ENCODE measurements at regions of chr15 and their contacts with region 1.

Region 1: GRCh38 chr15:60507596-60508424 is 28.9 kb upstream of the ICE2 start:
- DNase-seq: peak; percentile 62
- ATAC-seq: peak; percentile 68
- H3K4me3 Mint-ChIP-seq: no peak overlapping the region
- H3K27ac Mint-ChIP-seq: peak overlapping the region; percentile 34
- H3K4me1 Mint-ChIP-seq: peaks cover 52% of the 10 kb centered on the region
- H3K27me3 Mint-ChIP-seq: no peaks in the 10 kb centered on the region

Region 2: DNA sequence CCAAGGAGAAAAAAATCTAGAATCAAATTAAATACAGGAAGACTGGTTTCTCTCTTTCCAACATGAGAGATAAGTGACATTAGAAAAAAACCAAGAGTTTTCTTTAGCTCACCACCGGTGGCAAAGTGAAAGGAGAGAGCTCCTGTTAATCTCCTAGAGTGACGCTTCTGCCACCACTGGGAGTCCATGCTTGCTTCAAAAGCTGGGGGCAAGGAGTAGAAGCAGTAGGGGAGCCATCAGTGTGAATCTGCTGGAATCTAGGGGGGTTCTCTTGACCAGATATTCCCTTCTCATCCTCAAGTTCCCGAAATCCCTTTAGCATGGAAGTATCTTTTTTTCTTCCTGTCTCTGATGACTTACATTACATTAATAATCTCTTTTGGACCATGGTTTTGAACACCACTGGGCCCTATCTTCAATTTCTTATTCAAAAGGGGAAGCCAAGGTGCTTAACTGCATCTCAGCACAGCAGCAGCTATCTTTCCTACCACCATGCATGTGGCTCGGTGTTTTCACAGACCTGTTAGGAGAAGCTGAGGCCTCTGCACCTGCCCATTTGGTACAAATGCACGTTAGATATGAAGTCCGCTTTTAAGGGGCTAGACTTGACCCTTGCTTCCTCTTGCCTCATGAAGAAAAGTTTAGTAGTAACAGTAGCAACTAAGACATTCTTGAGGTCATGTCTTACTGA is 22.3 kb before region 1 on chr15:
- CTCF ChIA-PET with region 1: interaction called, 10 read pairs
- POLR2A ChIA-PET with region 1: no interaction called
- intact Hi-C with region 1: no loop called
- DNase-seq: no peak
- ATAC-seq: no peak
- H3K4me3 Mint-ChIP-seq: no peak overlapping the region
- H3K27ac Mint-ChIP-seq: no peak overlapping the region
- H3K4me1 Mint-ChIP-seq: peaks cover 18% of the 10 kb centered on the region
- H3K27me3 Mint-ChIP-seq: no peaks in the 10 kb centered on the region

Region 3: GRCh38 chr15:60580650-60581376 is 73.0 kb after region 1 on chr15:
- CTCF ChIA-PET with region 1: interaction called, 15 read pairs
- POLR2A ChIA-PET with region 1: no interaction called
- intact Hi-C with region 1: loop called (anchors 2 kb)
- DNase-seq: peak; percentile 64
- ATAC-seq: peak; percentile 80
- H3K4me3 Mint-ChIP-seq: peak overlapping the region; percentile 54
- H3K27ac Mint-ChIP-seq: peak overlapping the region; percentile 87
- H3K4me1 Mint-ChIP-seq: peaks cover 90% of the 10 kb centered on the region
- H3K27me3 Mint-ChIP-seq: no peaks in the 10 kb centered on the region

Region 4: GRCh38 chr15:60804986-60805949 is 297.5 kb after region 1 on chr15:
- CTCF ChIA-PET with region 1: no interaction called
- POLR2A ChIA-PET with region 1: no interaction called
- intact Hi-C with region 1: loop called in 1 of 2 experiments (anchors 5 kb)
- DNase-seq: no peak
- ATAC-seq: no peak
- H3K4me3 Mint-ChIP-seq: no peak overlapping the region
- H3K27ac Mint-ChIP-seq: no peak overlapping the region
- H3K4me1 Mint-ChIP-seq: peaks cover 75% of the 10 kb centered on the region
- H3K27me3 Mint-ChIP-seq: no peaks in the 10 kb centered on the region

Region 5: DNA sequence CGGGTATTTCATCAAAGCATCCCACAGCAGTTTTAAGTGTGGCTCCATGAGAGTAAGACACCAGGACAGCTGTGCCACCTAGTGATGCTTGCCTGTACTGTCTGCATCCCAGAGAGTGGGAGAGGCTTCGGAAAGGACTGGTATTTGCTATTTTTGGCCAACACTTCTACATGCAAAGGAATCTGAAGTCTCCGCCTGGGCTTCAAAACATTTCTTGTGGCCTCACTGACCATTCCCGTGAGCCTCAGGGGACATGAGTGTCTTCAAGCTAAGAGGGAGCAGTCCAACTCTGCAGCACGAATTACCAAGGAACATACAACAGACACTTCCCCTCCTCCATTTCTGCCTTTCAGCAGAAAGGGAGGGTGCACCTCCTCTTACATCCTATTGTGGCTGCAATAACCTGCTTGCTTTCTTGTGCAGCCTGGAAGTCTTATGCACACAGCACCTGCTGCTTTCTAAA is 543.8 kb after region 1 on chr15:
- CTCF ChIA-PET with region 1: no interaction called
- POLR2A ChIA-PET with region 1: no interaction called
- intact Hi-C with region 1: loop called in 1 of 2 experiments (anchors 10 kb)
- DNase-seq: peak; percentile 12
- ATAC-seq: no peak
- H3K4me3 Mint-ChIP-seq: no peak overlapping the region
- H3K27ac Mint-ChIP-seq: no peak overlapping the region
- H3K4me1 Mint-ChIP-seq: no peaks in the 10 kb centered on the region
- H3K27me3 Mint-ChIP-seq: peaks cover 10% of the 10 kb centered on the region

Measured in activated CD4-positive, alpha-beta T cell treated with anti-CD3 and anti-CD28 coated beads for 36 hours (primary cell).